ENCODE measurements at regions of chr17 and their contacts with region 1.

Region 1: GRCh38 chr17:39543176-39543575 is 64.5 kb downstream of the NEUROD2 start:
- DNase-seq: no peak
- H3K4me3 ChIP-seq: no peak overlapping the region
- H3K4me1 ChIP-seq: no peaks in the 10 kb centered on the region
- H3K27me3 ChIP-seq: no peaks in the 10 kb centered on the region

Region 2: GRCh38 chr17:39621523-39622379 is 78.6 kb after region 1 on chr17:
- in situ Hi-C with region 1: loop called (anchors 5 kb)
- DNase-seq: peak; percentile 68 to 89
- H3K4me3 ChIP-seq: no peak overlapping the region
- H3K4me1 ChIP-seq: peaks cover 9% of the 10 kb centered on the region
- H3K27me3 ChIP-seq: no peaks in the 10 kb centered on the region